Activated naive CD8-positive, alpha-beta T cell treated with anti-CD3 and anti-CD28 coated beads, Interleukin-2, amount 10 ng/mL, durations not matched to agents 7 days and 5 days (primary cell): ENCODE measurements at regions of chr19 and their contacts with region 1.

Region 1: DNA sequence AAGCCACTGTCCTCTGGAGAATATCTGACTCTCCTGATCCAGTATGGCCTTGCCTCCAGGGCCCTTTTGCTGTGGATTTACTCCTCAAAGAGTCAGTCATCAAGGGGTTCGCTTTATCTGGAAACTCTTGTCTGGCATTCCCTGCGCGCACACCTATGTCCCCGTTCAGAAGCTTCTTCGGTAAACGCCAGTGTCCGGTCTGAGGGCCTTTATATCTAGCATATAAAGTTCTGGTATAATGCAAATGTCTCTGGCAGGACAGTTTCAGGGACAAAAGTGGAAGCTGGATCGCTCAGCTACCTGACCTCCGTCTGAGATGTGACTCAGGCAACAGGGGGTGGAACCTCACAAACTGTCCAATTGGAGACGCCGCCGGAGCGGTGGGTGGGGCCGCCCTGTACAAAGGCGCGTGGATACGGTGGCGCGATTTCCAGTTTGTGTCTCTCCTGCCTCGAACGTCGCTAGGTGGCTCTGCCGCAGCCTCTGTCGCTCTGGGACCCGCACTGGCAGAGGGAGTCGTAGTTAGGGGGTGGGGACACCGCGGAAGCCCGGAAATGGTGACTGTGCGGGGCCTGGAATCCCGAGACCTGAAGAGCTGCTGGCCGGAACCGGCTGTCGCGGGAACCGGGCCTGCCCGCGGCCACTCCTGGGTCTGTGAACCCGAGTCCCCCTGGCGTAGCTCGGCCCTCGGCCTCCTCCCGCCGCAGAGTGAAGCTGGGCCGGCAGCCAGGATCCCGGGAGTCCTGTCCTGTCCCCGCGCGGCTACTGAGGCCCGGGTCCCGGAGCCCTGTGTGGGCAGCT is 10.6 kb upstream of the ZNF709 start:
- DNase-seq: peak; percentile 91
- ATAC-seq: peak; percentile 99
- H3K4me3 Mint-ChIP-seq: peak overlapping the region; percentile 93
- H3K27ac Mint-ChIP-seq: peak overlapping the region; percentile 88
- H3K4me1 Mint-ChIP-seq: peaks cover 12% of the 10 kb centered on the region
- H3K27me3 Mint-ChIP-seq: no peaks in the 10 kb centered on the region

Region 2: GRCh38 chr19:12365236-12366162 is 129.7 kb before region 1 on chr19 and contains the start of gene ZNF442:
- POLR2A ChIA-PET with region 1: interaction called, 10 read pairs
- DNase-seq: peak; percentile 80
- ATAC-seq: peak; percentile 98
- H3K4me3 Mint-ChIP-seq: peak within 1 kb of the TSS; percentile 96
- H3K27ac Mint-ChIP-seq: peak within 1 kb of the TSS; percentile 91
- H3K4me1 Mint-ChIP-seq: peaks cover 16% of the 10 kb centered on the region
- H3K27me3 Mint-ChIP-seq: peaks cover 1% of the 10 kb centered on the region
- total RNA-seq, gene ZNF442: 2.6 to 4.3 TPM

Region 3: DNA sequence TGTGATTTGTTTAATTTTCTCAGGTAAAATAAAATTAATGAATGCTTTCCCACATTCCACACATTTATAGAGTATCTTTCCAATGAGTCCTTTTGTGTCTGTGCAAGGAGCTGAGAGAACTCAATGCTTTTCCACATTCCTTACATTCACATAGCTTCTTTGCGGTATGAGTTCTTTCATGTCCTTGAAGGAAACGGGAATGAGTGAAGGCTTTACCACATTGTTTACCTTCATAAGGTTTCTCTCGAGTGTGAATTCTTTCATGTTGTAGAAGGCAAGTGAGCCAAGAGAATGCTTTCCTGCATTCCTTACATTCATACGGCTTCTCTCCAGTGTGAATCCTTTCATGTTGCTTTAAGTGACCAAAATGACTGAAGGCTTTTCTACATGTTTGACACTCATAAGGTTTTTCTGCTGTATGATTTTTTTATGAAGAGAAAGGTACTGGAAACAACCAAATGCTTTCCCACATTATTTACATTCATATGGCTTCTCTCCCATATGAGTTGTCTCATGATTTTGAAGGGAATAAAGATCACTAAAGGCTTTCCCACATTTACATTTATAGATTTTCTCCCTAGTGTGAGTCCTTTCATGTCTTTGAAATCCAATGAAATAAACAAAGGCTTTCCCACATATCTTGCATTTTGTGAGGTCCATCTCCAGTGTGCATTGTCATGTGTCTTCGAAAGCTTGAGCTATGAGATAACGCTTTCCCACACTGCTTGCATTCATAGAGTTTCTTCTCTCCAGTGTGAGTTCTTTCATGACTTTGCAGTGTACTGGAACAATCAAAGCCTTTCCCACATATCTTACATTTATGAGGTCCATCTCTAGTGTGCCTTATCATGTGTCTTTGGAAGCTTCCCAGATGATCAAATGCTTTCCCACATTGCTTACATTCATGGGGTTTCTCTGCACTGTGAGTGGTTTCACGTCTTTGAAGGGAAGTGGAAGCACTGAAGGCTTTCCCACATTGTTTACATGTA is 115.2 kb before region 1 on chr19:
- POLR2A ChIA-PET with region 1: no interaction called
- DNase-seq: no peak
- ATAC-seq: no peak
- H3K4me3 Mint-ChIP-seq: no peak overlapping the region
- H3K27ac Mint-ChIP-seq: no peak overlapping the region
- H3K4me1 Mint-ChIP-seq: no peaks in the 10 kb centered on the region
- H3K27me3 Mint-ChIP-seq: no peaks in the 10 kb centered on the region

Region 4: GRCh38 chr19:12484371-12485051 is 10.7 kb before region 1 on chr19 and contains the start of gene ZNF709:
- POLR2A ChIA-PET with region 1: interaction called, 12 read pairs
- DNase-seq: peak; percentile 90
- ATAC-seq: peak; percentile 95
- H3K4me3 Mint-ChIP-seq: peak within 1 kb of the TSS; percentile 90
- H3K27ac Mint-ChIP-seq: peak within 1 kb of the TSS; percentile 83
- H3K4me1 Mint-ChIP-seq: peaks cover 24% of the 10 kb centered on the region
- H3K27me3 Mint-ChIP-seq: no peaks in the 10 kb centered on the region
- total RNA-seq, gene ZNF709: 4.9 to 5.0 TPM

Region 5: DNA sequence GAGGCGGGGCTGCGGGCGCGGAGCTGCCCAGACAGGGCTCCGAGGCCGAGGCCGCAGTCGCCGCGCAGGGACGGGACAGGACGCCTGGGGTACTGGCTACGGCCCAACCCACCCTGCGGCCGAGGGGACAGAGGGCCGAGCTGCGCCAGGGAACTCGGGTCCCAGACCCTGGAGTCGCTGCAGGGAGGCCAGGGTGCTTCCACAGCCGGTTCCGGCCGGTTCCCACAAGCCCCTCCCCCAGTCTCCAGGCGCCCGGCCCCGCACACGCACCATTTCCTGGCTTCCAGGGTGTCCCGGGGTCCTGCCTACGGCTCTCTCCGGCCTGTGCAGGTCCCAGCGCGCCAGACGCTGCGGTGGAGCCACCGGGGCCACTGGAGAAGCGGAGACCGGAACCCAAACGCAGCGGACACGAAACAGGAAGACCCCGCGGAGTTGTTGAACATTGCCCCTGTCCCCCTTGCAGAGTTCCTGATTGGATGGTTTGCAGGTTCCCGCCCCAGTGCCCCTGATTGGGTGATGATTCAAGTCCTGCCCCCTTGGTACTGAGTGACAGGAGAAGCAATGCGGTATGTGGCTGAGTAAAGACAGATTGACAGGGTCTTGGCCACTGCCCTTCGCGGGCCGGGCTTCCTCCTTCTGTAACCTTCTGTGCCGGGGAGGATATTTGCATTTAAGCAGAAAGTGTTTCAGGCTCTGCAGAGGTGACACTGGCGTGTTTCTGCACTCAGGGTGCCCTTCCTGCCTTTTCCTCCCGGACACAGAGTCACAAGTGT is 56.0 kb after region 1 on chr19 and contains the start of gene ZNF564:
- POLR2A ChIA-PET with region 1: interaction called, 11 read pairs
- DNase-seq: peak; percentile 84
- ATAC-seq: peak; percentile 99
- H3K4me3 Mint-ChIP-seq: peak within 1 kb of the TSS; percentile 96
- H3K27ac Mint-ChIP-seq: peak within 1 kb of the TSS; percentile 95
- H3K4me1 Mint-ChIP-seq: peaks cover 23% of the 10 kb centered on the region
- H3K27me3 Mint-ChIP-seq: no peaks in the 10 kb centered on the region
- total RNA-seq, gene ZNF564: 18.1 to 19.0 TPM

Region 6: DNA sequence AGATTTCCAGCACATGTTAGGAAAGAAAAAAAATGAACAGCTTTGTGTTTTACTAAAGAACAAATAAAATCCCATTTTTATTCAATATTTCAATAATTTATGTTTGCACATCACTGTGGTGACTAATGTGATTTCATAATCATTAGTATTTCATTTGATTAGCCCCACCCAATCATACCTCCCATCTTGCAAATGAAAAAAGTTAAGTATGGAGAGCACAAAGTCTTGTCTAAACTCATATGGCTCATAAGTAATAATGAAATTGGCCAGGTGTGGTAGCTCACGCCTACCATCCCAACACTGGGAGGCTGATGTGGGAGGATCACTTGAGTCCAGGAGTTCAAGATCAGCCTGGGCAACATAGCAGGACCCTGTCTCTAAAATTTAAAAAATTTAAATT is 111.6 kb after region 1 on chr19:
- POLR2A ChIA-PET with region 1: no interaction called
- DNase-seq: no peak
- ATAC-seq: no peak
- H3K4me3 Mint-ChIP-seq: no peak overlapping the region
- H3K27ac Mint-ChIP-seq: no peak overlapping the region
- H3K4me1 Mint-ChIP-seq: peaks cover 18% of the 10 kb centered on the region
- H3K27me3 Mint-ChIP-seq: no peaks in the 10 kb centered on the region

Region 7: DNA sequence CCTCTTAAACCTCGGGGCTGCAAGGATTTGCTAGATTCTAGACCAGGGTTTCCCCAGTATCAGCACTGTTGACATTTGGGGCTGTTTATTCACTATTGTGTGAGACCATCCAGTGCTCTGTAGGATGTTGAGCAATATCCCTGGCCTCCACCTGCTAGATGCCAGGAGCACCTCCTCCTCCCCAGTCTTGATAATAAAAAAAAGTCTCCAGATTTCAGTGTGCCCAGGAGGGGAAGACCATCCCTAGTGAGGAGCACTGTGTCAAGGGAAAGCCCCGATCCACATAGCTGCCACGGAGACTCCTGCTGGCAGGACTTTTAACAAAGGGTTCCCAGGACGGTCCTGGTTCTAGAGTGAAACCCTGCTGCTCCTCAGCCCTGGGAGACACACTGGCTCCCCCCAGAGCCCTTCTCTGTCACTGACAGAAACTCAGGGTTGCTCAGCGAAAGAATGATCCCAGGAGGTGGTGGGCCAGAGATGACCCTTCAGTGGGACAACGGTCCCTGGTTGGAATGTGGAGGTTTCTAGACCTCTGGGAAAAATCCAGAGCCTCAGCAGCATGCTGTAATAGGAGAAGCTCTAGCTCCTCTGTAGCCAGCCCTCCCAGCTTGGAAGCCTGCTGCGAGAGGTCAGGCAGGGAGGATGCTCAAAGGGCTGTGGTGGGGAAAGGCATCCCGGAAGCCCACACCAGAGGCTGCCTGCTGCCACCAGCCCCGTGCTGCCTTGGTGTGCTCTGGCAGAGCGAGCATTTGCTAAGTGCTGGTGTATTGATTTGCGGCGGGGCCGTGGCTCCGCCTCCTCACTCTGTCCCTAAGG is 587.2 kb after region 1 on chr19:
- POLR2A ChIA-PET with region 1: no interaction called
- DNase-seq: no peak
- ATAC-seq: no peak
- H3K4me3 Mint-ChIP-seq: no peak overlapping the region
- H3K27ac Mint-ChIP-seq: no peak overlapping the region
- H3K4me1 Mint-ChIP-seq: no peaks in the 10 kb centered on the region
- H3K27me3 Mint-ChIP-seq: peaks cover 2% of the 10 kb centered on the region